ENCODE measurements at regions of chr11 and their contacts with region 1.

Region 1: GRCh38 chr11:9265211-9266131 is at the start of gene DENND5A:
- DNase-seq: peak; percentile 91 to 94 (median 92)
- ATAC-seq: peak; percentile 91 to 96 (median 94)
- H3K4me3 ChIP-seq: peak within 1 kb of the TSS; percentile 85 to 99 (median 96)
- H3K27ac ChIP-seq: peak within 1 kb of the TSS; percentile 93 to 99 (median 98)
- H3K4me1 ChIP-seq: peaks cover 3 to 43% (median 31%) of the 10 kb centered on the region in 12 donors
- H3K27me3 ChIP-seq: no peaks in the 10 kb centered on the region
- CTCF ChIP-seq: peak in 1 of 12 donors; percentile 18
- POLR2A ChIP-seq: peak in 1 of 2 donors; percentile 80
- total RNA-seq, gene DENND5A: 104 to 175 (median 118) TPM

Region 2: GRCh38 chr11:9130297-9130696 is 135.2 kb before region 1 on chr11:
- intact Hi-C with region 1: no loop called
- DNase-seq: no peak
- ATAC-seq: no peak
- H3K4me3 ChIP-seq: no peak overlapping the region
- H3K27ac ChIP-seq: peak overlapping the region in 1 of 12 donors; percentile 10
- H3K4me1 ChIP-seq: peaks cover 0 to 1% (median 0%) of the 10 kb centered on the region in 12 donors
- H3K27me3 ChIP-seq: no peaks in the 10 kb centered on the region
- CTCF ChIP-seq: no peak
- POLR2A ChIP-seq: no peak

Region 3: DNA sequence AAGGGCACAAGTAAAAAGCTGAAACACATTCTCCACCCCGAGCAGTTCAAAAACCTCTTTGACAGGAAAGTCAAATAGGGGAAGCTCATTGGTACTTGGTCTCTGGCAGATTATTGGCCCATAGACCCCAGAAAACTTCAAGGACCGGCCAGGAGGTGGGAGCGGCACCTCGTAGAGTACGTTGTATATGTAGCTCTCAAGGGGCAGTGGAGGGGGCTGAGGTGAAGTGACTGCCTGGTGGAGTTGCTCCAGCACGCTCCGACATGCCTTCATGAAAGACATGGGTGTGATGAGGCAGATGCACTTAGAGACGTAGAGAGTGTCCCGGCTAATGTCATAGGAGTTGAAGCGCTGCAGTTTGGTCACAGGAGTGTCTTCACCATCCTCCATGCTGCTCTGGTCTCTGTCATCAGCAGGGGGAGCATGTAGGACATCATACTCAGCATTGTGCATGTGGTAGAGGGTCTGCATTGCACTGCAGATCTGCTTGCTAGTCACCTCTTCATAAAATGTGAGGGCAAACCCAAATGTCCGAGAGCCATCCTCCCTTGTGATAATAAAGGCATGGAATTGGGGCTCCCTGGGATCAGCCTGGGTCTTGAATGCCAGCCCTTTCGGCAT is 61.7 kb before region 1 on chr11:
- intact Hi-C with region 1: loop called in 7 of 10 experiments (anchors 5 to 10 kb)
- DNase-seq: peak in 1 of 5 donors; percentile 33
- ATAC-seq: peak; percentile 45 to 74 (median 60)
- H3K4me3 ChIP-seq: no peak overlapping the region
- H3K27ac ChIP-seq: no peak overlapping the region
- H3K4me1 ChIP-seq: peaks cover 0 to 82% (median 29%) of the 10 kb centered on the region in 12 donors
- H3K27me3 ChIP-seq: no peaks in the 10 kb centered on the region
- CTCF ChIP-seq: peak in 8 of 12 donors; percentile 21 to 53 (median 36)
- POLR2A ChIP-seq: no peak

Region 4: GRCh38 chr11:9314291-9315036 is 49.0 kb after region 1 on chr11 and contains the start of gene TMEM41B:
- intact Hi-C with region 1: loop called in 4 of 10 experiments (anchors 1 to 5 kb)
- DNase-seq: peak; percentile 98 to 100 (median 99)
- ATAC-seq: peak; percentile 99 to 100 (median 99)
- H3K4me3 ChIP-seq: peak within 1 kb of the TSS; percentile 67 to 100 (median 91)
- H3K27ac ChIP-seq: peak within 1 kb of the TSS; percentile 51 to 96 (median 88)
- H3K4me1 ChIP-seq: peaks cover 0 to 34% (median 15%) of the 10 kb centered on the region in 12 donors
- H3K27me3 ChIP-seq: peaks cover 0 to 4% (median 0%) of the 10 kb centered on the region in 9 donors
- CTCF ChIP-seq: peak in 6 of 12 donors; percentile 1 to 44 (median 16)
- POLR2A ChIP-seq: peak; percentile 26 to 84
- total RNA-seq, gene TMEM41B: 17.7 to 27.8 (median 22.6) TPM

Region 5: DNA sequence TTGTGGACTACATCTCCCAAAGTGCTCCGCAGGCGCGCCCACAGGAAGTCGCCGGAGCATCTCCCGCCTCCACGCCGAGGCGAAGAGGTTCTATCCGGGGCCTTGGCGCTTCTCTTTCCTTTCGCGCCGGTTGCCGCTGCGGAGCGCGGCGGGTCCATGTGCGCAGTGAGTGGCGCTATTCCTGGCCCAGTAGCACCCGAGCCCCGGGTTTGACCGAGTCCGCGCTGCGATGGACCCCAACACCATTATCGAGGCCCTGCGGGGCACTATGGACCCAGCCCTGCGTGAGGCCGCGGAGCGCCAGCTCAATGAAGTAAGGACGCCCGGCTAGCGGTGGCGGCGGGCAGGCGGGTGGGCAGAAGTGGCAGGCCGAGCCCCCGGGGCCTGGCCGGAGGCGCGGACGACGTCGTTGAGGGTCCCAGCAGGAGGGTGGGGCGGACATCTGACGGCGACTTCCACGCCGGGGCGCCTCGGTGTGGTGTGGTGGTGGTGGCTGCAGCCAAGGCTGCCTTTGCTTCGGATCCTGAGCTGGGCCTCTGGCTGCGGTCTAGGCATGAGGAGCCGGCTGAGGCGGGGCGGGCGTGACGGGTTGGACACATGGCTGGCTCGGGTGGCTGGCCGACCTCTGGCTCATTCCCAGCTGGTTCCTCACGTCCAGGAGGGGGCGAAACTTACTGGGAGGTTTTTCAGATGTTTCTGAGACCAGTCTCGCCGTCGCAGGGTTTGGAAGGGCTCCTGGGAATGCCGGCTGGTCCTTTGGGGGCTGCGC is 119.2 kb after region 1 on chr11 and contains the start of gene IPO7:
- intact Hi-C with region 1: loop called in 4 of 10 experiments (anchors 5 to 10 kb)
- DNase-seq: peak; percentile 90 to 95 (median 94)
- ATAC-seq: peak; percentile 92 to 97 (median 96)
- H3K4me3 ChIP-seq: peak within 1 kb of the TSS; percentile 74 to 96 (median 89)
- H3K27ac ChIP-seq: peak within 1 kb of the TSS; percentile 72 to 97 (median 95)
- H3K4me1 ChIP-seq: peaks cover 0 to 42% (median 20%) of the 10 kb centered on the region in 12 donors
- H3K27me3 ChIP-seq: no peaks in the 10 kb centered on the region
- CTCF ChIP-seq: peak in 6 of 12 donors; percentile 15 to 49 (median 35)
- POLR2A ChIP-seq: peak in 1 of 2 donors; percentile 77
- total RNA-seq, gene IPO7: 71.7 to 200 (median 141) TPM

Region 6: DNA sequence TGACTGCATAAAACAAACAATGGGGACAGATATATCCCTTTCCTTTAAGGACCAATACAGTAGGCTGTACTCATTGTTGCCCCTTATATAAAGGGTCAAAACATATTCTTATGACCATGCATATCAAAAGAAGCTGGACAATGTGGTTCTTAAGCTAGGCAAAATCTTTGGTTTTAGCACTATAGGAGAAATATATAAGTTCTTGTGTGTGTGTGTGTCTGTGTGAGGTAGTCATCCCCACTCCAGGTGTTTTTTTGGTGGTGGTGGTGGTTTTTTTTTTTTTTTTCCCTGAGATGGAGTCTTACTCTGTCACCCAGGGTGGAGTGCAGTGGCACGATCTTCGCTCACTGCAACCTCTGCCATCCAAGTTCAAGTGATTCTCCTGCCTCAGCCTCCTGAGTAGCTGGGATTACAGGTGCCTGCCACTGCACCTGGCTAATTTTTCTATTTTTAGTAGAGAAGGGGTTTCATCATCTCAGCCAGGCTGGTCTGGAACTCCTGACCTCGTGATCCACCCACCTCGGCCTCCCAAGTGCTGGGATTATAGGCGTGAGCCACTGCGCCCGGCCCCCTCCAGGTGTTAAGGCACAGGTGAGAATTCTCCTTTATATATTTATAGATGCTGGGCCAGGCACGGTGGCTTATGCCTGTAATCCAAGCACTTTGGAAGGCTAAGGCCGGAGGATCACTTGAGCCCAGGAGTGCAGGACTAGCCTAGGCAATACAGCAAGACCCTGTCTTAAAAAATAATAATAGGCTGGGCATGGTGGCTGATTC is 183.3 kb after region 1 on chr11:
- intact Hi-C with region 1: no loop called
- DNase-seq: no peak
- ATAC-seq: no peak
- H3K4me3 ChIP-seq: no peak overlapping the region
- H3K27ac ChIP-seq: no peak overlapping the region
- H3K4me1 ChIP-seq: no peaks in the 10 kb centered on the region
- H3K27me3 ChIP-seq: no peaks in the 10 kb centered on the region
- CTCF ChIP-seq: no peak
- POLR2A ChIP-seq: no peak

Measured in heart left ventricle (tissue), 16 donors.